ENCODE measurements at regions of chr19 and their contacts with region 1.

Region 1: DNA sequence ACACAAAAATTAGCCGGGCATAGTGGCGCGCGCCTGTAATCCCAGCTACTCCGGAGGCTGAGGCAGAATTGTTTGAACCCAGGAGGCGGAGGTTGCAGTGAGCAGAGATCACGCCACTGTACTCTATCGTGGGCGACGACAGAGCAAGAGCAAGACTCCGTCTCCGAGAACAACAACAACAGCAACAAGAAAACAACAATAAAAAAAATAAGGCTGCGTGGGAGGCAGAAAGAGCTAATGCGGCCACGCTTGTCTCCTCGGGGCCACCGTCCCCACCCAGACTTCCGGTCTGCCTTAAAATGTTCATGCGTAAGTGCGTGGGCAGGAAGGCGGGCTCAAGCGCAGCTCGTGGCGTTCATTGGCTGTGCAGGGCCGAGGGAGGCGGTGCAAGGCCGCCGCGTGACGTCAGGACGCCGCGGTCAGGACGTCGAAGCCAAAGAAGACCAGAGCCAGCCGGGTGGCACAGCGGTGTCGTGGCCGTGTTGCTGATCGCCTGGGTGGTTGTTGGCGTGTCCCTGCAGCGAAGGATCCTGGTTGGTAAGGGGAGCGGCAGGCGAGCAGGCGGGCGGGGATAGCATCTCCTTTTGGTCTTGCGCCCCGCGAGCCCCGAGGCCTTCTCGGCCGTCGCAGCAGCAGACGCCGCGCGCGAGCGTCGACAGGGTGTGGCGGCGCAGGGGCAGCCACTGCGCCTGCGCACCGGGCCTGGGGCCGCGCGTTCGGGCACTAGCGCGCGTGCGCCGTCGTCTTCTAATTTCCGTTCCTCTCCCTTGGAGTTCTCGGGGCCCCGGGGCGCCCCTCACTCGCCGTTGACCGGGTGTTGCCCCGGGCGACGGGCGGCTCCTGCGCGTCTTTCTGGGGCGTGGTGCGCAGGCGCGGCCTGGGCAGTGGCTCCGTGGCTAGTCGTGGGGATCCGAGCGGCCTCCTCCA is at the start of gene LENG8:
- DNase-seq: peak; percentile 98
- ATAC-seq: peak; percentile 92
- H3K4me3 Mint-ChIP-seq: peak within 1 kb of the TSS; percentile 100
- H3K27ac Mint-ChIP-seq: peak within 1 kb of the TSS; percentile 97
- H3K4me1 Mint-ChIP-seq: peaks cover 49% of the 10 kb centered on the region
- H3K27me3 Mint-ChIP-seq: no peaks in the 10 kb centered on the region
- CTCF ChIP-seq: no peak
- total RNA-seq, gene LENG8: 296 and 363 TPM in 2 replicates

Region 2: DNA sequence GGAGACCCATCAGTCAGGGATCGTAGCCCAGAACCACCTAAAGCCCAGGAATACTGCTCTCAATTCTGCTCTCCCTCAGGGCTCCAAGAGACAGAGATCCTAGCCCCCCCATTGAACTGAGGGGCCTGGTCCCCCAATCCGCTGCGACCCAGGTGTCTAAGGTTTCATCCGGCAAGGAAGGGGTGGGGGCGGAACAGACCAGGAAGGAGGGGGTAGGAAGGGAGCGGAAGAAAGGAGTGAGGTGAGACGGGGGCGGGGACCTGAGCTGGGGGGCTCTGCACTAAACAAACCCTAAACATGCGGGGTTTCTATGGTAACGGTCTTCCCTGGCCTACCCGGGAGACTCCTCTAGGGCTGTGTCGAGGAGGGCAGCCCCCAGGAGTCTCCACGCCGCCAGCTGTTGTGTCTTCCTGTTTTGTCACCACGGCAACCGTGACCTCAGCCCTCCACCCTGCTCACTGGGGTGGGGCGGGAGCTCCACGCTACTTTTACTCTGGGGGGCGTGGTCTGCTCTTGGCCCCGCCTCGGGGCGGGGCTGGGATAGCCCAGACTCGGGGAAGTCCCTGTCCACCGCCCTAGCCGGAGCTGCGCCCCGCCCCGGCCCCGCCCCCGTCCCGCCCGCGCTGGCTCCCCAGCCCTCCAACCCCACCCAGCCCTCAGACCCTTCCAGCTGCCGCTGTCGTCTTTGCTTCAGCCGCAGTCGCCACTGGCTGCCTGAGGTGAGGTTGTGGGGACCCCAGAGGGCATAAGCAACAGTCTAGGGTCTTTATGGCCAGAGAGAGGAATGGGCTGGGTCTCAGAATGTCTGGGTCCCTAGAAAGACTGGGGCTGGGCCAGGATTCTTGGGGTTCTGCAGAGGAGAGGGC is 581.6 kb before region 1 on chr19 and contains the start of gene MYADM:
- CTCF ChIA-PET with region 1: no interaction called
- POLR2A ChIA-PET with region 1: no interaction called
- intact Hi-C with region 1: loop called (anchors 5 kb)
- DNase-seq: peak; percentile 99
- ATAC-seq: peak; percentile 65
- H3K4me3 Mint-ChIP-seq: peak within 1 kb of the TSS; percentile 91
- H3K27ac Mint-ChIP-seq: peak within 1 kb of the TSS; percentile 93
- H3K4me1 Mint-ChIP-seq: peaks cover 44% of the 10 kb centered on the region
- H3K27me3 Mint-ChIP-seq: no peaks in the 10 kb centered on the region
- CTCF ChIP-seq: no peak
- total RNA-seq, gene MYADM: 10.9 and 12.9 TPM in 2 replicates

Region 3: DNA sequence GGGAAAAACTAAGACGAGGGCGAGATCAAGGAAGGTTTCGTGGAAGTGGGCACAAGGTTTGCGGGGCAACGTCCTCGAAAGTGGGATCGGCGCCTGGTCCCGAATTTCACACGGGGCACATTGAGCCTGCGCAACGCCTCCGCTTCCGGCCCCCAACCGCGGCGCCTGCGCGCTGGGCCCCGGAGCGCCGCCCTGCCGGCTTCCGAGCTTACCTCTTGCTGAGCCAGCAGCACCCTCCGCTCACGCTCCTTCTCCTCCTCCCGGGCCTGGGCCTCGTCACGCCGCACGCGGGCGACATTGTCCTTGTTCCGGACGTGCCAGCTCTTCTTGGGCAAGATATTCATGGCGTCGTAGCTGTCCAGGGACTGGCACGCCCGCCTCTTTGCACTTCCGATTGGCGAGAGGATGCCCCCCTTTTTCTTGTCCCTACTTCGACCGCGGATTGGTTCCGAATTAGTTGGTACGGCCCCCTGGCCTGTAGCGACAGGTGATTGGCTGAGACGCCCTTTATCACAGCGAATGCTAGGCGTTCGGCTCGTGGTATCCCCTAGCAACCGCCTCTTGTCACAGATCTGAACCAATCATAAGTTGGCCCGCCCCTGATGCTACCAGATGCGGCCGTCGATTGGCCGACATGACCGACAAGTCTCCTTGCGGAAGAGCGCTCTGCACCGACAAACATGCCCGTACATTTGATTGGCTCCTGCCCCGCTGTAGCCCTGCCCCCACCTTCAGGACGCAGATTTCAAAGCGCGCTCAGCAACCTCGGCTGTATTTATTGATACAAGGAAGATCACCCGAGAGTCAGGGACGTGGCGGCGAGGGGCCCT is 289.5 kb before region 1 on chr19 and contains the start of gene LENG1:
- CTCF ChIA-PET with region 1: no interaction called
- POLR2A ChIA-PET with region 1: interaction called, 5 read pairs
- intact Hi-C with region 1: loop called (anchors 1 kb)
- DNase-seq: peak; percentile 84
- ATAC-seq: peak; percentile 85
- H3K4me3 Mint-ChIP-seq: peak within 1 kb of the TSS; percentile 100
- H3K27ac Mint-ChIP-seq: peak within 1 kb of the TSS; percentile 99
- H3K4me1 Mint-ChIP-seq: peaks cover 51% of the 10 kb centered on the region
- H3K27me3 Mint-ChIP-seq: peaks cover 8% of the 10 kb centered on the region
- CTCF ChIP-seq: no peak
- total RNA-seq, gene LENG1: 8.3 and 8.4 TPM in 2 replicates

Region 4: DNA sequence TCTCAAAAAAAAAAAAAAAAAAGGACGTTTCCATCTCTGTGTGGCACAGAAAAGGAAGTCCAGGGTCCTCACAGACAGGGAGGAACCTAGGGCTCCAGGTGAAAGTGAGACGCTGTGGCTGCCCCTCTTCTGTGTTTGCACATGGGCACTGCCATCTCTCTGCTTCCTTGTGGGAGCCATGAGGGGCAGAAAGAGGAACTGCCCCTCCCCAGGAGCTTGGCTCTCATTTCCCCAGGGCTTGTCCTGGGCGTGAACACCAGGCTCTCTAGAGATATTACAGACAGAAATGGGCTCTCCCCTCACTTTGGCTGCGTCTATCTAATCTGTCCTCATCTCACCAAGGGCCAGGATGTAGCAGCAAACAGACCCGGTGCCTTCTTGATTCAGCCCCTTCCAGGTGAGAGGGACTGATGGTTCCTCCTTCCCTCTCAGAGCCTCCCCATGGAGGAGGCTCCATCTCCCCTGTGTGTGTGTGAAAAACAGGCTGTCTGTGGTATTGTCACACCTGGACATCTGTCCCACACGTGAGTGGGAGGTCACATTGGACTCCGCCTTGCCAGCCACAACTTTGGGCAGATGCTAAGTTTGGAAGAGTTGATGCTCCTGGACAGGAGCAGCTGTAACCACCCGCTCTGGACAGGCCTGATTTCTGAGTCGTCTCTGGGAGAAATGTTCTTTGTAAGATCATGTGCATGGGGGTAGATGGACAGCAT is 109.2 kb before region 1 on chr19:
- CTCF ChIA-PET with region 1: no interaction called
- POLR2A ChIA-PET with region 1: interaction called, 14 read pairs
- intact Hi-C with region 1: no loop called
- DNase-seq: peak; percentile 56
- ATAC-seq: peak; percentile 86
- H3K4me3 Mint-ChIP-seq: peak overlapping the region; percentile 66
- H3K27ac Mint-ChIP-seq: peak overlapping the region; percentile 89
- H3K4me1 Mint-ChIP-seq: peaks cover 84% of the 10 kb centered on the region
- H3K27me3 Mint-ChIP-seq: no peaks in the 10 kb centered on the region
- CTCF ChIP-seq: no peak

Region 5: GRCh38 chr19:55117636-55118391 is 668.8 kb after region 1 on chr19 and contains the start of gene PPP1R12C:
- CTCF ChIA-PET with region 1: no interaction called
- POLR2A ChIA-PET with region 1: no interaction called
- intact Hi-C with region 1: loop called (anchors 1 kb)
- DNase-seq: peak; percentile 96
- ATAC-seq: peak; percentile 93
- H3K4me3 Mint-ChIP-seq: peak within 1 kb of the TSS; percentile 97
- H3K27ac Mint-ChIP-seq: peak within 1 kb of the TSS; percentile 87
- H3K4me1 Mint-ChIP-seq: peaks cover 55% of the 10 kb centered on the region
- H3K27me3 Mint-ChIP-seq: no peaks in the 10 kb centered on the region
- CTCF ChIP-seq: no peak
- total RNA-seq, gene PPP1R12C: 115 and 139 TPM in 2 replicates

Measured in activated B cell treated with CpG ODN at 0.5 μM for 24 hours (primary cell).